ENCODE measurements at regions of chr3 and their contacts with region 1.

Region 1: GRCh38 chr3:32106280-32106928 is at the start of gene GPD1L:
- DNase-seq: peak; percentile 96 to 97
- H3K4me3 ChIP-seq: peak within 1 kb of the TSS; percentile 53 to 96 (median 58)
- H3K27ac ChIP-seq: peak within 1 kb of the TSS; percentile 68 to 89 (median 69)
- H3K4me1 ChIP-seq: peaks cover 50 to 55% of the 10 kb centered on the region in 2 donors
- H3K27me3 ChIP-seq: no peaks in the 10 kb centered on the region
- CTCF ChIP-seq: no peak
- POLR2A ChIP-seq: peak in 1 of 2 donors; percentile 81
- total RNA-seq, gene GPD1L: 66.4 to 137 (median 104) TPM

Region 2: GRCh38 chr3:31531992-31532586 is 574.3 kb before region 1 on chr3:
- intact Hi-C with region 1: loop called (anchors 10 kb)
- DNase-seq: peak; percentile 99 to 100
- H3K4me3 ChIP-seq: peak overlapping the region; percentile 71 to 90 (median 89)
- H3K27ac ChIP-seq: peak overlapping the region; percentile 74 to 99 (median 98)
- H3K4me1 ChIP-seq: peaks cover 27 to 32% of the 10 kb centered on the region in 2 donors
- H3K27me3 ChIP-seq: no peaks in the 10 kb centered on the region
- CTCF ChIP-seq: peak in 1 of 6 experiments; percentile 18
- POLR2A ChIP-seq: peak; percentile 59 to 84